Left colon (tissue), 2 donors: ENCODE measurements at regions of chr14 and their contacts with region 1.

Region 1: DNA sequence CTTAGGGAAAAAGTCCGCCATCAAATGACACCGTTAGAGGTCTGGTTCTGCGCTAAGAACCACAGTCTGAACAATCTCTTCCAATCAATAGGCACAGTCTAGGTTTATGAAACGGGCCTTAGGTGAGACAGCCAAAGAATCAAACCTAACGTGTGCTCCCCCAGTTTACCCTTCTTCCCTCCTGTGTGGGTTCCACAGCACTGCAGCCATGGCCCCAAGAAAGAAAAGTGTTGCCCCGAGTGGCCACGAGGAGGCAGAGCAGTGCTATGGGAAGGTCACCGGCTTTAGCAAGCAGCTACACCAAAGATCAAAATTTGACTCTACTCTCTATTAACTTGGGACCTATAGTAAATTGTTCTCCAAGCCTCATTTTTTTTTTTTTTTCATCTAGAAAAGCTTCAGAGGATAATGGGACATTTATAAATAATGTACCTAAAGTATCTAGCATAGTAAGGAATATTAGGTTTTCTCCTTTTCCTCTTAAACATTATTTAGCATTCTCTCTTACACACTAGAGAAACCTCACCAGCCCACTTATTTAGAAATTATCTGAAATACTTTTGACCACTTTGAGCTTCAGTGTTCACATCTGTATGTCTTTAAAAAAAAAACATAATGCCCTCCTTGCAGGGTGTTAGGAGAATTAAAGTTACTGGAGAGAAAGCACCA is 70.2 kb upstream of the GPHB5 start:
- DNase-seq: peak; percentile 46 to 64
- ATAC-seq: peak; percentile 78

Region 2: DNA sequence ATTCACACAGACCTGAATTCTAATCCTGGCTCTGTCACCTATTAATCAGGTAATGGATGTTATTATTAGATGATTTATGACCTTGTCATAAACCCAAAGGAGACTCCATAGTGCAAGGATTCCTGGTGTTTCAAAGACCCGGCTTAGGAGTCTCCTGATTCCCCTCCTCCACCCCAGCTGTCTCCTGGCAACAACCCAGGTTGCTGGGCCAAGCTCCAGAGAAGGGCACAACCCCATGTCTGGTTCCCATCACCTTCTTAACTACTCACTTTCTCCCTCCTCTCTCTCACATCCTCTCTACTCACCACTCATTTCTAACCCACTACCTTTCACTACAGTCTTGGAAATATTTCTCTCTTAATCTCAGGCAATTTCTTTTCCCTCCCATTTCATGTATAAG is 143.0 kb before region 1 on chr14:
- intact Hi-C with region 1: no loop called
- DNase-seq: peak; percentile 6 to 28
- ATAC-seq: no peak

Region 3: GRCh38 chr14:63543000-63543825 is 154.3 kb after region 1 on chr14 and contains the start of gene PPP2R5E:
- intact Hi-C with region 1: loop called in 1 of 2 experiments (anchors 5 kb)
- DNase-seq: peak; percentile 96 to 99
- ATAC-seq: peak; percentile 92
- total RNA-seq, gene PPP2R5E: 54.2 to 57.2 TPM

Region 4: DNA sequence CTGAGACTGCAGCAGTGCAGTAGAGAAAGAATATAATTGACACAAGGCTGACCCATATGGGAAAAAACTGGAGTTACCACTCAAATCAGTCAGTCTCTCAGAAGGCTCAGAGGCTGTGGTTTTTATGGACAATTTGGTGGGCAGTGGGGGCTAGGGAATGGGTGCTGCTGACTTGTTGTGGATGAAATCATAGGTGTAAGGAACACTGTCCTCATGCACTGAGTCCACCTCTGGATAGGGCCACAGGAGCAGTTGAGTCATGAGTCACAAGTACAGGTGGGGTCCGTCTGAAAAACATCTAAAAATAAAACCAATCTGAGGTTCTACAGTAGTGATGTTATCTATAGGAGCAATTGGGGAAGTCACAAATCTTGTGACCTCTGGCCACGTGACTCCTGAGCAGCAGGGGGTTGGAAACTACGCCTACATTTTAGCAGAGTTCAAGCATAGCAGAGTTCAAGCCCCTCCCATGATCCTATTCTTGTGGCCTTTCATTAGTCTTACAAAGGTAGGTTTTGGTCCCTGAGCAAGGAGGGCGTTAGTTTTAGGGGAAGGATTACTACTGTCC is 357.0 kb after region 1 on chr14:
- intact Hi-C with region 1: no loop called
- DNase-seq: peak; percentile 40 to 41
- ATAC-seq: peak; percentile 41